ENCODE measurements at regions of chr9 and their contacts with region 1.

Region 1: GRCh38 chr9:68584189-68585033 is 43.7 kb upstream of the TMEM252 start:
- DNase-seq: peak; percentile 85
- H3K4me3 ChIP-seq: no peak overlapping the region
- H3K27ac ChIP-seq: no peak overlapping the region
- H3K4me1 ChIP-seq: no peaks in the 10 kb centered on the region
- H3K27me3 ChIP-seq: no peaks in the 10 kb centered on the region
- CTCF ChIP-seq: peak; percentile 97 to 99 (median 98)
- POLR2A ChIP-seq: no peak

Region 2: GRCh38 chr9:68493958-68494577 is 90.3 kb before region 1 on chr9:
- intact Hi-C with region 1: no loop called
- DNase-seq: no peak
- H3K4me3 ChIP-seq: no peak overlapping the region
- H3K27ac ChIP-seq: no peak overlapping the region
- H3K4me1 ChIP-seq: no peaks in the 10 kb centered on the region
- H3K27me3 ChIP-seq: no peaks in the 10 kb centered on the region
- CTCF ChIP-seq: no peak
- POLR2A ChIP-seq: no peak

Region 3: DNA sequence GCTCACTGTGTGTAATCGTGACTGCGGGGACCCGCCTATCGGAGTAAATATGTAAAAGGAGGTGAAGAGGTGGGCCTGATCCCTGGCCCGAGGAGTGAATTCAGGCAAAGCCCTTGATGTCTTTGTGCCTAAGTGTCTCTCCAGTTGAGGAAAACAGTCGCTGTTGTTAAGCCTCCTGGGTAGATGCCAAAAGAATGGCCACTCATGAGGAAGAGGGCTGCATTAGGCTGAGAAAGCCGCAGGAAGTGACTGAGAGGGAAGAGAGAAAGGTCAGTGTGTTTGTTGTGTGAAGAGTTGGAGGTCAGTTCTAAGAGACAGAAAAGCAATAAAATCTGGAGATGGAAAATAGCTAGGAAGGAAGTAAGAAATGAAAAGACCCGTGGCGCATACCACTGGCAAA is 84.8 kb after region 1 on chr9:
- intact Hi-C with region 1: no loop called
- DNase-seq: no peak
- H3K4me3 ChIP-seq: no peak overlapping the region
- H3K27ac ChIP-seq: no peak overlapping the region
- H3K4me1 ChIP-seq: no peaks in the 10 kb centered on the region
- H3K27me3 ChIP-seq: no peaks in the 10 kb centered on the region
- CTCF ChIP-seq: no peak
- POLR2A ChIP-seq: no peak

Region 4: GRCh38 chr9:68779558-68780384 is 195.4 kb after region 1 on chr9:
- intact Hi-C with region 1: loop called (anchors 10 kb)
- DNase-seq: peak; percentile 85
- H3K4me3 ChIP-seq: peak overlapping the region; percentile 71 to 72
- H3K27ac ChIP-seq: peak overlapping the region; percentile 89 to 90
- H3K4me1 ChIP-seq: no peaks in the 10 kb centered on the region
- H3K27me3 ChIP-seq: no peaks in the 10 kb centered on the region
- CTCF ChIP-seq: peak; percentile 18 to 52 (median 39)
- POLR2A ChIP-seq: peak; percentile 81

Region 5: GRCh38 chr9:68949271-68950000 is 365.0 kb after region 1 on chr9:
- intact Hi-C with region 1: loop called (anchors 5 kb)
- DNase-seq: peak; percentile 41
- H3K4me3 ChIP-seq: no peak overlapping the region
- H3K27ac ChIP-seq: no peak overlapping the region
- H3K4me1 ChIP-seq: no peaks in the 10 kb centered on the region
- H3K27me3 ChIP-seq: no peaks in the 10 kb centered on the region
- CTCF ChIP-seq: peak in 3 of 4 experiments; percentile 22 to 58 (median 49)
- POLR2A ChIP-seq: no peak

Region 6: DNA sequence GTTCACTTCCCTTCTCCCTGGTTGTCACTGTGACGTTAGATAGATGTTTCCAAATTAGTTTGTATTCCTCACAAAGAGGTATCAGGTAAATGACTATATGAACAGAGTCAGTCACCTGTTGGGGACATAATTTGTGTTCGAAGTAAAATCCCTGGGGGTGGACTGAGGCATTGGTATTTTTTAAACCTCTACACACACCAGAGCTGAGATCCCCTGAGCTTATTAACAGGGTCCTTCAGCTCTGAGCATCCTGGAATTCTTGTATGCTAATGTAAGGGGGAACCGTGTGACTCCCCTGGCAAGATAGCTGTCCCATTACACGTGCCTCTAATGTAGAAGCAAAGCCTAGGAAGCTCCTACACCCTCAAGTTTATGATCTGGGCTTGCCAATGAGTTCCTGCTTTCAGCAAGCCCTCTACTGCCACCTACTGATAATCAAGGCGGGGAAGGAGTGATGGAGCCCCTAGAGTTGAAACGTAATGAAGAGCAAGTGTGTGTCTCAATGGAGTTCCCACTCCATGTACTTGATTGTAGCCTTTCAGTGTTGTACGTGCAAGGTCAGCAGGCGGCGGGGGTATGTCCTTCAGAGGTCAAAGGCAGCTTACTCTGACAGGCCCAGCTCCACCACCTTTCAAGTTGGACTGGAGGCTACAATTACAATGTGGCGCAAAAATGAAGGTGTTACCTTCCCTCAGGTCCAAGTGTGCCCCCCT is 415.1 kb after region 1 on chr9:
- intact Hi-C with region 1: loop called (anchors 5 kb)
- DNase-seq: peak; percentile 68
- H3K4me3 ChIP-seq: no peak overlapping the region
- H3K27ac ChIP-seq: no peak overlapping the region
- H3K4me1 ChIP-seq: no peaks in the 10 kb centered on the region
- H3K27me3 ChIP-seq: no peaks in the 10 kb centered on the region
- CTCF ChIP-seq: peak; percentile 42 to 79 (median 76)
- POLR2A ChIP-seq: no peak

Region 7: DNA sequence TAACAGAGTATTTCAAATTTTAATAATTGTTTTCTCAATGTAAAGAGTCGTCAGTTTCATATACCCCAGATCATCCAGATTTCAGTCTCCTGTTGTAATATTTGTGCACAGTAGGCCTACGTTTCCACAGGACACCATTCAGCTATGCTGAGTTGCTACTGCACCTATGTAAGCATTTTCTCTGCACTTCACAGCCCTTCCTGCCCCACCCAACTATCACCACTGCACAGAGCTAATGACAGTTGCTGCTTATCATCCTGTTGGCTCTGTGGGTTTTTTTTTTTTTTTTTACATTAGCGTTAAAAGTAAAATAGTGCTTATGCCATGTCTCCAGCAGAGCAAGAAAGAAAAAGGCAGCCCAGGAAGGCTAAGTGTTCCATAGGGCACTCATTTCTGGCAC is 435.4 kb after region 1 on chr9:
- intact Hi-C with region 1: loop called (anchors 5 kb)
- DNase-seq: no peak
- H3K4me3 ChIP-seq: no peak overlapping the region
- H3K27ac ChIP-seq: no peak overlapping the region
- H3K4me1 ChIP-seq: no peaks in the 10 kb centered on the region
- H3K27me3 ChIP-seq: no peaks in the 10 kb centered on the region
- CTCF ChIP-seq: no peak
- POLR2A ChIP-seq: no peak

Region 8: DNA sequence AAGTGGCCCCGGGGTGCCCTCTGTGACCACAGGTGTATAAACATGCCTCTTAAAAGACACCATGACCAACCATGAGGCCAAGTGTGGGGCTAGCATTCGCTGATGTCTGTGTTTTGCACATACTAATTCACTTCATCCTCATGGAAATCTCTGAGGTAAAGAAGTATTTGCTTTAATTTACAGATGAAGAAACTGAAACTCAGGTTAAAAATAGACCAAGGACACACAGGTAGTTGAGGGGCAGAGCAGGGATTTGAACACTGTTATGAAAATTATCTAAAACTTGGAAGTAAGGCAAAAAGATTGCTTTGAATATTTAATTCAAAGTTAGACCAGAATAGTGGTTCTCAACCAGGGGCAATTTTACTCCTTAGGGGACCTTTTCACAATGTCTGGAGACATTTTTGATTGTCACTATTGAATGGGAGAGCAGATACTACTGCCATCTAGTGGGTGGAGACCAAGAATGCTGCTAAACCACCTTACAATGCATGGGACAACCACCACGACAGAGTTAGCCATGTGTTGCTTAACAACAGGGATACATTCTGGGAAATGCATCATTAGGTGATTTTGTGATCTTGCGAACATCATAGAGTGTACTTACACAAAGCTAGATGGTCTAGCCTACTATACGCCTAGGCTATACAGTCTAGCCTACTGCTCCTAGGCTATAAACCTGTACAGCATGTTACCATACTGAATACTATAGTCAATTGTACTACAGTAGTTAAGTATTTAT is 443.1 kb after region 1 on chr9:
- intact Hi-C with region 1: loop called (anchors 2 kb)
- DNase-seq: peak; percentile 23
- H3K4me3 ChIP-seq: no peak overlapping the region
- H3K27ac ChIP-seq: no peak overlapping the region
- H3K4me1 ChIP-seq: no peaks in the 10 kb centered on the region
- H3K27me3 ChIP-seq: no peaks in the 10 kb centered on the region
- CTCF ChIP-seq: peak; percentile 23 to 65 (median 62)
- POLR2A ChIP-seq: no peak

Measured in prostate gland (tissue), 2 donors.